ENCODE measurements at regions of chr1 and their contacts with region 1.

Region 1: DNA sequence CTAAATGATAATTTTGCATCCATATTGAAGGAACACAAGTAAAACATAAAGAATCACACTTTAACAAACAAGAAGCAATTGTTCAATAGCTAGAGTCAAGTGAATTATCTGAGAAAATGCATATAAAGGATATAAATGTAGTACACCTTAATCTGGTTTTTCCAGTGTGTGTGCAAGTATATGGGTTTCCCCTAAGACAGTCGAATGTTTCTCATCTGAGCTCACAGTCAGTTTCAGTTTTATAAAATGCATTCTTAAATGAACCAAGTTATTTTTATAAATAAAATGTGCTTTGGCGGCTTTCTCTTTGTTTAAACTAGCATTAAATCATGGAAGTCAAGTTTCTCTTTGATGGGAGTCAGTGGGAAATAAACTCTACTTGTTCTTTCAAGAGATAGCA is 125.9 kb downstream of the PTPRC start:
- DNase-seq: no peak
- ATAC-seq: peak in 1 of 3 donors; percentile 43
- H3K4me3 ChIP-seq: no peak overlapping the region
- H3K4me3 Mint-ChIP-seq: no peak overlapping the region
- H3K27ac ChIP-seq: no peak overlapping the region
- H3K27ac Mint-ChIP-seq: no peak overlapping the region
- H3K4me1 ChIP-seq: no peaks in the 10 kb centered on the region
- H3K4me1 Mint-ChIP-seq: peaks cover 48 to 54% of the 10 kb centered on the region in 2 donors
- H3K27me3 ChIP-seq: no peaks in the 10 kb centered on the region
- H3K27me3 Mint-ChIP-seq: no peaks in the 10 kb centered on the region
- CTCF ChIP-seq: no peak

Region 2: DNA sequence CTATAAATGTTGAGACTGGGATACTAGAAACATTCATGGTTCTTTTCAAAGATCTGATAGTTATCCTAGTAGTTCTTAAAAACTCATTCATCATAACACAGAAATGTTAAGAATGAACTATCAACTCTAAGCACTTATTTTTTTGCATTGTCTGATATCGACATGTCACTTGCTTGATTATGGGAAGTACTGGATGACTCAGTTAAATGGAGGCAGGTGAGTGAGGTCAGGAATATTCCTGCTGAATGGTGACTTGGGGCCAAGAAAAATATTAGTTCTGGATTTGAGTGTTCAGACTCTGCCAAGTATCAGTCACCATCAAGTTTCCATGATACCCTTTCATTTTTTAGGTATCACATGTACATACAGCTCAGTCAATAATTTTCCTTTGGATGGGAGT is 544.3 kb before region 1 on chr1:
- intact Hi-C with region 1: no loop called
- DNase-seq: no peak
- ATAC-seq: no peak
- H3K4me3 ChIP-seq: no peak overlapping the region
- H3K4me3 Mint-ChIP-seq: no peak overlapping the region
- H3K27ac ChIP-seq: no peak overlapping the region
- H3K27ac Mint-ChIP-seq: no peak overlapping the region
- H3K4me1 ChIP-seq: no peaks in the 10 kb centered on the region
- H3K4me1 Mint-ChIP-seq: peaks cover 34 to 42% of the 10 kb centered on the region in 2 donors
- H3K27me3 ChIP-seq: no peaks in the 10 kb centered on the region
- H3K27me3 Mint-ChIP-seq: no peaks in the 10 kb centered on the region
- CTCF ChIP-seq: no peak

Region 3: DNA sequence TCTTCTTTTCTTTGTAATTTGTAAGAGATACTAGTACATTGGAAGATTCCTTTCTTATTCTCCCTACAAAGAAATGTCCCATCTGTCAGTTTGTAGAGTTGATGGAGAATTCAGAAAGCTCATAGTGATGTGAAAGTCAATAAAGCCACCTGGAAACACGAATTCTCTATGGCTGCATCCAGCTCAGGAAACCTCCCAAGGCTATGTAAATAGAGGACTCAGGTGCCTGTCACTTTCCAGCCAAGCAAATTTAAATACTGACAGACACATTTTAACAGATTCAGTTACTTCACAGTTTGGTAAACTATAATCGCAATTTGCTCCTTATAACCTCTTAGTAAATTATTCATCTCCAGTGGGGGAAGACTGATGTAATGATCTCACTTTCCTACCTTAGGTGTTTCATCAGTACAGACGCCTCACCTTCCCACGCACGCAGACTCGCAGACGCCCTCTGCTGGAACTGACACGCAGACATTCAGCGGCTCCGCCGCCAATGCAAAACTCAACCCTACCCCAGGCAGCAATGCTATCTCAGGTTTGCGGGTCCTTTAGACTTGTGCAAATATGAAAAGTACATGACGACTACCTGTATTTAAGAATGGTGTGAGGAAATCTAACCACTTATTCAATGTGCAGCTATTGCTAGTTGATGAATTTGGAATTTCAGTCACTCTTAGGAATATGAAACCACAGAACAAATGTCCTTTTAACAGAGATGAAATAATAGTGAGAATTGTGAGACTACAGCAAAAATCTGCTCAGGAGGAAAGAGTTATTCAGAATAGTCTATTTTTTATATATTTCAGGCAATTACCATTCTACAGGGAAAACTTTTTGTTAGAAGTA is 65.4 kb before region 1 on chr1:
- intact Hi-C with region 1: no loop called
- DNase-seq: peak; percentile 35 to 84
- ATAC-seq: peak; percentile 42 to 81 (median 66)
- H3K4me3 ChIP-seq: no peak overlapping the region
- H3K4me3 Mint-ChIP-seq: peak overlapping the region; percentile 65
- H3K27ac ChIP-seq: no peak overlapping the region
- H3K27ac Mint-ChIP-seq: peak overlapping the region; percentile 83 to 88
- H3K4me1 ChIP-seq: peaks cover 25% of the 10 kb centered on the region
- H3K4me1 Mint-ChIP-seq: peaks cover 65 to 77% of the 10 kb centered on the region in 2 donors
- H3K27me3 ChIP-seq: no peaks in the 10 kb centered on the region
- H3K27me3 Mint-ChIP-seq: no peaks in the 10 kb centered on the region
- CTCF ChIP-seq: peak; percentile 1

Region 4: GRCh38 chr1:199373139-199373538 is 608.4 kb after region 1 on chr1:
- intact Hi-C with region 1: no loop called
- DNase-seq: no peak
- ATAC-seq: no peak
- H3K4me3 ChIP-seq: no peak overlapping the region
- H3K4me3 Mint-ChIP-seq: no peak overlapping the region
- H3K27ac ChIP-seq: no peak overlapping the region
- H3K27ac Mint-ChIP-seq: no peak overlapping the region
- H3K4me1 ChIP-seq: no peaks in the 10 kb centered on the region
- H3K4me1 Mint-ChIP-seq: no peaks in the 10 kb centered on the region
- H3K27me3 ChIP-seq: no peaks in the 10 kb centered on the region
- H3K27me3 Mint-ChIP-seq: peaks cover 0 to 2% of the 10 kb centered on the region in 2 donors
- CTCF ChIP-seq: no peak

Region 5: GRCh38 chr1:199463521-199464128 is 698.9 kb after region 1 on chr1:
- intact Hi-C with region 1: loop called (anchors 5 kb)
- DNase-seq: peak in 1 of 2 donors; percentile 26
- ATAC-seq: peak in 1 of 3 donors; percentile 52
- H3K4me3 ChIP-seq: no peak overlapping the region
- H3K4me3 Mint-ChIP-seq: no peak overlapping the region
- H3K27ac ChIP-seq: no peak overlapping the region
- H3K27ac Mint-ChIP-seq: no peak overlapping the region
- H3K4me1 ChIP-seq: no peaks in the 10 kb centered on the region
- H3K4me1 Mint-ChIP-seq: peaks cover 0 to 5% of the 10 kb centered on the region in 2 donors
- H3K27me3 ChIP-seq: no peaks in the 10 kb centered on the region
- H3K27me3 Mint-ChIP-seq: peaks cover 0 to 2% of the 10 kb centered on the region in 2 donors
- CTCF ChIP-seq: peak; percentile 29